GM10248 (cell line): ENCODE measurements at regions of chr5 and their contacts with region 1.

Region 1: DNA sequence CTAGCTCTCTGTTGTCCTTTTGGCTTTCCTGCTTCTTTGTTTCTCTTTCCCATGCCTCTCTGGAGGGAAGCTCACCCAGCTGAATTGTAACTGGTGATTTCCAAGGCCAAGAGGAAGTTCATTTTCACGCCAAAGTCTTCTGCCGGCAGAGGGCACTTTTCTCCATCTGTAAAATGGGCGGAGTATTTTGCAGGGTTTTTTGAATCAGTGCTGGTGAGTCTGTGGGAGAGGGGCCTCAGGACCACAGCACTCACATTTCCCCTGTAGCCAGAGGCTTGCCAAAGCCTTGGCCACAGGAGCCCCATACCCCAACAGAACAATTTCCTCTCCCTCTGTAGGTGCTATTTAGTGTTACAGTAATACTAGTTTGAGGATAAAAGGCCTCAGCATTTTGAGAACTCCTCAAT is 42.3 kb upstream of the MATR3 start:
- DNase-seq: peak; percentile 78
- CTCF ChIP-seq: peak; percentile 64

Region 2: DNA sequence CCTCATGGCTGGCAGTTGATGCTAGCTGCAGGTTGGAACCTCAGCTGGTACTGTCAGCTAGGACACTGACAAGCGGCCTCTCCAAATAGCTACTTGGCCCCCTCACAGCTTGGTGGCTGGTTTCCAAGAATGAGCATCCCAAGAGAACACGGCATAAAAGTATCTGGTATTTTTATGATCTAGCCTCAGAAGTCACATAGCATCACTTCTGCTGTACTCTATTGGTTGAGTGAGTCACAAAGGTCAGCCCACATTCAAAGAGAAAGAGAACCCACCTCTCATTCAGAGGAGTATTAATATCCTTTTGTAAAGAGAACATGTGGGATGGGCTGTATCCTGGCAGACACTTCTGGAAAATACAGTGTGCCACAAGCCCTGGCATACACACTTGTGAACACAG is 47.1 kb before region 1 on chr5:
- CTCF ChIA-PET with region 1: interaction called, 12 read pairs
- POLR2A ChIA-PET with region 1: no interaction called
- DNase-seq: no peak
- CTCF ChIP-seq: no peak

Region 3: GRCh38 chr5:139262742-139263445 is 11.6 kb after region 1 on chr5:
- CTCF ChIA-PET with region 1: interaction called, 47 read pairs
- POLR2A ChIA-PET with region 1: interaction called, 4 read pairs
- DNase-seq: peak; percentile 79
- CTCF ChIP-seq: peak; percentile 91

Region 4: DNA sequence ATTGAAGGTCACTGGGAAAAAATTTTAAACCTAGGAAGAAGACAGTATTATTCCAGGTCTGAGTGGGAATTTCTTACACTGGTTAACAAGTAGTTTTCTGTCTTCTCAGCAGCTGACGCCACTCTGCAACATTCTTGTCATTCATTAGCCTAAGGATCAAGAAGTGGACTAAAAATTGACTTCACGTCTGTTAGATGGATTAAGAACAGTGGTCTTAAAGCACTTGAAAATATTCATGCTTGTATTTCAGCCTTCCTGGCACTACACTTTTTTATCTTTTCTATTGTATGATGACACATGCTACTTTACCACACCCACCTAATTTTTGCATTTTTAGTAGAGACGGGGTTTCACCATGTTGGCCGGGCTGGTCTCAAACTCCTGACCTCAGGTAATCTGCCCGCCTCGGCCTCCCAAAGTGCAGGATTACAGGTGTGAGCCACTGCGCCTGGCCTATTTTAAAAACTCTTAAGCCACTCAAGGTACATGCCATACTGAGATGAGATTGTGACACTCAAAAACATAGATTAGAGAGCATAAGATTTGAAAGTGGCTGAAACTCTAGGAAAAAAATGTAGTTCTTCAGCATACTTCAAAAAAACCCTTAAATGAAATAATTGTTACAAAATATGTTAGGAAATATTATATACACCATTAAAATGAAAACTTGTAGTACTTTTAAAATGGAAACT is 50.7 kb after region 1 on chr5:
- CTCF ChIA-PET with region 1: no interaction called
- POLR2A ChIA-PET with region 1: no interaction called
- DNase-seq: no peak
- CTCF ChIP-seq: no peak

Region 5: GRCh38 chr5:140785905-140786686 is 1534.8 kb after region 1 on chr5 and contains the start of gene PCDHA1:
- CTCF ChIA-PET with region 1: no interaction called
- POLR2A ChIA-PET with region 1: no interaction called
- DNase-seq: no peak
- CTCF ChIP-seq: no peak